Mammary epithelial cell (primary cell): ENCODE measurements at regions of chr13 and their contacts with region 1.

Region 1: DNA sequence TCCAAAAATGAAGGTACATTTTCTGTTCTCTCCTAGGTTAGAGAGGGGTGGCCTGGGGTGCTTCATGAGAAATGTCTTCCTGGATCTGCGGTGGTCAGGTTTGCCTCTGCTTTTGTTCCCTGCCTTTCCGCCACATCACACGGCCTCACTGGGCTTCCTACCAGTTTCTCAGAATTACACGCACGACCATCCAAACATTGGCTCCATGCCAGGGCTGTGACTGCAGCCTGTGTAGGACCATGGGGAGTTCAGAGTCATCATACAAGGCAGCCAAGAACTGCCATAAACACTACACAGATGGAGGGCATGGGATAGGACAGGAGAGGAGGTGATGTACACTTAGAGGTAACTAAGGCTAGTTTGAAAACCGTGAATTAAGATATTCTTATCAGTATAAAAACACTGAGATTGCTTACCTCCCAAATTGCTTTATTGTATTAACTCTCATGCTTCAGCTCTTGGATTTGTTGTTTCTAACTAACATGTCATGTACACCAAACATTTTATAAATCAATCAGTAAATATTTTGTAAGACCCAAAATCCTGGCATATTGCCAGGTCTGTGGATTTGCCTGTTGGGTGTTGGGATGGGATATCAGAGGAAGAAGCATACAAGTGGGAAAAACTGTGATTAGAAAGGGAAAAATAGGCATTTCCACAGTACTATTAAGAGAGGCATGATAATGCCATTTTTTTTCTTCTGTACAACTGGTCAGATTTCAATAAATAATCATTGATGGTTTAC is 45.2 kb downstream of the CDADC1 start:
- DNase-seq: no peak
- H3K4me3 ChIP-seq: no peak overlapping the region
- H3K27ac ChIP-seq: no peak overlapping the region
- H3K4me1 ChIP-seq: no peaks in the 10 kb centered on the region
- H3K27me3 ChIP-seq: no peaks in the 10 kb centered on the region
- CTCF ChIP-seq: no peak

Region 2: GRCh38 chr13:49033101-49033500 is 259.8 kb before region 1 on chr13:
- CTCF ChIA-PET with region 1: no interaction called
- dilution Hi-C with region 1: no loop called
- in situ Hi-C with region 1: no loop called
- intact Hi-C with region 1: no loop called
- DNase-seq: no peak
- H3K4me3 ChIP-seq: no peak overlapping the region
- H3K27ac ChIP-seq: no peak overlapping the region
- H3K4me1 ChIP-seq: no peaks in the 10 kb centered on the region
- H3K27me3 ChIP-seq: no peaks in the 10 kb centered on the region
- CTCF ChIP-seq: no peak

Region 3: GRCh38 chr13:49214917-49215376 is 78.0 kb before region 1 on chr13:
- CTCF ChIA-PET with region 1: no interaction called
- dilution Hi-C with region 1: loop called (anchors 5 kb)
- in situ Hi-C with region 1: no loop called
- intact Hi-C with region 1: no loop called
- DNase-seq: no peak
- H3K4me3 ChIP-seq: no peak overlapping the region
- H3K27ac ChIP-seq: no peak overlapping the region
- H3K4me1 ChIP-seq: no peaks in the 10 kb centered on the region
- H3K27me3 ChIP-seq: peaks cover 20% of the 10 kb centered on the region
- CTCF ChIP-seq: peak in 1 of 2 donors; percentile 15

Region 4: GRCh38 chr13:49256841-49257240 is 36.1 kb before region 1 on chr13:
- CTCF ChIA-PET with region 1: no interaction called
- dilution Hi-C with region 1: no loop called
- in situ Hi-C with region 1: no loop called
- intact Hi-C with region 1: no loop called
- DNase-seq: no peak
- H3K4me3 ChIP-seq: no peak overlapping the region
- H3K27ac ChIP-seq: no peak overlapping the region
- H3K4me1 ChIP-seq: no peaks in the 10 kb centered on the region
- H3K27me3 ChIP-seq: no peaks in the 10 kb centered on the region
- CTCF ChIP-seq: no peak